Activated naive CD8-positive, alpha-beta T cell treated with anti-CD3 and anti-CD28 coated beads, Interleukin-2, amount 10 ng/mL, durations not matched to agents 7 days and 5 days (primary cell): ENCODE measurements at regions of chr13 and their contacts with region 1.

Region 1: DNA sequence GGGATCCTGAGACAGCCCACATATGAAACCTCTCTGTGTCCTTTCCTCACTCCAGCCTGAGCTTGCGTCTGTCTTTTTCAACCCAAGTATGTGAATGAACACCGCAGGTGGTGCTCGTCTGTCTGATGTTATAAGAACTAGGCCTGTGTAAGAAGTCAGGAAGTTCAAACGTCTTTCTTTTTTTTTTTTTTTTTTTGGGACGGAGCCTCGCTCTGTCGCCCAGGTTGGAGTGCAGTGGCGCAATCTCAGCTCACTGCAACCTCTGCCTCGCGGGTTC is 92.3 kb downstream of the ANKRD10 start:
- DNase-seq: no peak
- ATAC-seq: peak; percentile 75
- H3K4me3 Mint-ChIP-seq: peak overlapping the region; percentile 83
- H3K27ac Mint-ChIP-seq: peak overlapping the region; percentile 88
- H3K4me1 Mint-ChIP-seq: peaks cover 19% of the 10 kb centered on the region
- H3K27me3 Mint-ChIP-seq: peaks cover 2% of the 10 kb centered on the region

Region 2: DNA sequence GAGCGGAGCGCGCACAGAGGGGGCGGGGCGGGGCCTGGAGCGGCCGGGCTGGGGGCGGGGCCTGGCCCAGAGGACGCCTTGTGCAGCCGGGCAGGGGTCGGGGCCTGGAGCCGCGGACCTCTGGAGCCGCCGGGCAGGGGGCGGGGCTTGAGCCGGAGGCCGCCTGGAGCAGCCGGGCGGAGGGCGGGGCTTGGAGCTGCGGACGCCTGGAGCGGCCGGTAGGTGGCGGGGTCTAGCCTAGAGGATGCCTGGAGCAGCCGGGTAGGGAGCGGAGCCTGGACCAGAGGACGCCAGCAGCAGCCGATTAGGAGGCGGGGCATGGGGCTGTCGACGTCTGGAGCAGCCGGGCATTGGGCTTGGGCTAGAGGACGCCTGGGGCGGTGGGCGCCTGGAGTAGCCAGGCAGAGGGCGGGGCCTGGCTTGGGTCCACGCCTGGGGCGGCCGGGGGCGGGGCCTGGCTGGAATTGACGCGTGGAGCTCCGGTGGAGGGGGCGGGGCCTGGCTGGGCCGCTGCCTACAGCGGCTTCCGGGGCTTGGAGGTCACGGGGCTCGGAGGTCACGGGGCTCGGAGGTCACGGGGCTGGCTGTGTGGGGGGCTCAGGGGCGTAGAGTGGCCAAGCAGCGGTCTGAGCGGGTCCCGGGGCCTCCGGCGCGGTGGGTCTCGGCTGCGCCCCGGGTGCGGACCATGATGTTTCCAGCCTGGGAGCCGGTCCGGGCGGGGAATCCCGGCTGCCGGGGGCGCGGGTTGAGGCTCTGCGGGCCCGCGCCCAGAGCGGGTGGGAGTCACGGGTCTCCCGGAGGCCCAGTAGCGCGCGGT is 92.7 kb after region 1 on chr13 and contains the start of gene ANKRD10:
- POLR2A ChIA-PET with region 1: interaction called, 11 read pairs
- DNase-seq: peak; percentile 99
- ATAC-seq: peak; percentile 81
- H3K4me3 Mint-ChIP-seq: peak within 1 kb of the TSS; percentile 93
- H3K27ac Mint-ChIP-seq: peak within 1 kb of the TSS; percentile 96
- H3K4me1 Mint-ChIP-seq: peaks cover 31% of the 10 kb centered on the region
- H3K27me3 Mint-ChIP-seq: no peaks in the 10 kb centered on the region
- total RNA-seq, gene ANKRD10: 117 to 119 TPM